Activated B cell treated with CpG ODN at 0.5 μM for 24 hours (primary cell): ENCODE measurements at regions of chr13 and their contacts with region 1.

Region 1: GRCh38 chr13:32443111-32443510 is 15.2 kb upstream of the N4BP2L1 start:
- DNase-seq: no peak
- ATAC-seq: peak; percentile 84
- H3K4me3 Mint-ChIP-seq: peak overlapping the region; percentile 15
- H3K27ac Mint-ChIP-seq: peak overlapping the region; percentile 71
- H3K4me1 Mint-ChIP-seq: peaks cover 21% of the 10 kb centered on the region
- H3K27me3 Mint-ChIP-seq: no peaks in the 10 kb centered on the region
- CTCF ChIP-seq: peak; percentile 26

Region 2: GRCh38 chr13:31431722-31432137 is 1011.4 kb before region 1 on chr13:
- CTCF ChIA-PET with region 1: no interaction called
- POLR2A ChIA-PET with region 1: no interaction called
- intact Hi-C with region 1: loop called (anchors 5 kb)
- DNase-seq: no peak
- ATAC-seq: peak; percentile 37
- H3K4me3 Mint-ChIP-seq: no peak overlapping the region
- H3K27ac Mint-ChIP-seq: no peak overlapping the region
- H3K4me1 Mint-ChIP-seq: no peaks in the 10 kb centered on the region
- H3K27me3 Mint-ChIP-seq: peaks cover 5% of the 10 kb centered on the region
- CTCF ChIP-seq: peak; percentile 48

Region 3: GRCh38 chr13:32010136-32010535 is 433.0 kb before region 1 on chr13:
- CTCF ChIA-PET with region 1: no interaction called
- POLR2A ChIA-PET with region 1: no interaction called
- intact Hi-C with region 1: no loop called
- DNase-seq: no peak
- ATAC-seq: no peak
- H3K4me3 Mint-ChIP-seq: no peak overlapping the region
- H3K27ac Mint-ChIP-seq: no peak overlapping the region
- H3K4me1 Mint-ChIP-seq: peaks cover 2% of the 10 kb centered on the region
- H3K27me3 Mint-ChIP-seq: no peaks in the 10 kb centered on the region
- CTCF ChIP-seq: no peak

Region 4: DNA sequence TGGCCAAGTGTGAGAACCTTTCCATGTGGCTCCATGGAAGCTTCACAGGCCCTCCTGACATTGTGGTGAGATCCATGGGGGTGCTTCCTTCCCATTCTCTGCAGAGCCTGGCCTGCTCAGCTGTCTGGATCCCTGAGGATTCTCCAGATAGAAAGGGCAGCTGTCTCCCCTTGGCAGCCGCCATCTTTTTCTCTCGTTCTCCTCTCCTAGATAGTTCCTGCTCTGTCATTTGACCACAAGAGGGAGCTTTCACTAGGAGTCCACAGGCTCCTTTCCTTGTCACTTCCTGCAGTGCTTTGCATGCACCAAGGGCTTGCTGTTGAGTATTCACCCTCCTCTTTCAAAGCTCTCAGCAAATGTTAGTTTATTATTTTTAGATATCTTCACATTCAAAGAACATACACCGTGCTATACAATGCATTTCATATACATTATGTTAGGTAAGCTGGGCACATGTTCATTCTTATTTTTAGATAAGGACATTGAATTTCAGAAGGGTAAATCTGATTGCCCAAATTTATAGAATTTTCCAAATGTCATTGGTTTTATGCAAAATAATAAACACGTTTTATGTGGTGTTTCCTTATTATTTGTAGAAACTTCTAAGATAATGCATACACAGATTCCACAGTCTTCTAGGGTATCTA is 278.4 kb before region 1 on chr13:
- CTCF ChIA-PET with region 1: interaction called, 4 read pairs
- POLR2A ChIA-PET with region 1: no interaction called
- intact Hi-C with region 1: loop called (anchors 2 kb)
- DNase-seq: no peak
- ATAC-seq: peak; percentile 52
- H3K4me3 Mint-ChIP-seq: no peak overlapping the region
- H3K27ac Mint-ChIP-seq: no peak overlapping the region
- H3K4me1 Mint-ChIP-seq: peaks cover 6% of the 10 kb centered on the region
- H3K27me3 Mint-ChIP-seq: no peaks in the 10 kb centered on the region
- CTCF ChIP-seq: no peak

Region 5: GRCh38 chr13:32233062-32233461 is 210.0 kb before region 1 on chr13:
- CTCF ChIA-PET with region 1: no interaction called
- POLR2A ChIA-PET with region 1: no interaction called
- intact Hi-C with region 1: no loop called
- DNase-seq: no peak
- ATAC-seq: no peak
- H3K4me3 Mint-ChIP-seq: no peak overlapping the region
- H3K27ac Mint-ChIP-seq: no peak overlapping the region
- H3K4me1 Mint-ChIP-seq: no peaks in the 10 kb centered on the region
- H3K27me3 Mint-ChIP-seq: no peaks in the 10 kb centered on the region
- CTCF ChIP-seq: no peak

Region 6: DNA sequence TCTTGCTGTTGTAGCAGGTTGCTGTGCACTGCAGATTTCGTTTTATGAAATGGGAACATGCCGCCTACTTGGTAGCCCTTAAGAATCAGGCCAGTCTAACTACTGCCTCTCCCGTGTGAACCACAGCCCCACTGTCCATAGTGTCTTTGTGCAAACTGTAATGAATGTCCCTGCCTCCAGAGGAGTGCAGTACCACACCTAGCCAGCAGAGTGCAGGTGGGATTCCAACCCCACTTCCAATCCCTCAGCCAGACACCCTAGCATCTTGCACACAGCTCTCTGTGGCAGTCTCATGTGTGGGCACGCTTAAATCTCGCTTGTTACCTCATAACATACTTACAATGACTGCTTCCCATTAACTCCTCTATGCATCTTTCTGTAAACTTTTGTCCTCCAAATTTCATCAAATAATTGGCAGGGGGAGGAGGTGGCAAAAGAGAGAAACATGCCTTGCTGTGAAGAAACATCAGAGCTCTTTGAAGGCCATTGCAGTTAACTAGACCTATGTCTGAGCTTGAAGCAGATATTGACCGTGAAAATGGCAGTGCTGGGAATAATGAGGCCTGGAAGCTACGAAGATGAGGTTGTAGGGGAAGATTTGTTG is 175.2 kb before region 1 on chr13:
- CTCF ChIA-PET with region 1: interaction called, 10 read pairs
- POLR2A ChIA-PET with region 1: no interaction called
- intact Hi-C with region 1: loop called (anchors 1 kb)
- DNase-seq: peak; percentile 22
- ATAC-seq: peak; percentile 93
- H3K4me3 Mint-ChIP-seq: no peak overlapping the region
- H3K27ac Mint-ChIP-seq: no peak overlapping the region
- H3K4me1 Mint-ChIP-seq: no peaks in the 10 kb centered on the region
- H3K27me3 Mint-ChIP-seq: no peaks in the 10 kb centered on the region
- CTCF ChIP-seq: peak; percentile 67

Region 7: DNA sequence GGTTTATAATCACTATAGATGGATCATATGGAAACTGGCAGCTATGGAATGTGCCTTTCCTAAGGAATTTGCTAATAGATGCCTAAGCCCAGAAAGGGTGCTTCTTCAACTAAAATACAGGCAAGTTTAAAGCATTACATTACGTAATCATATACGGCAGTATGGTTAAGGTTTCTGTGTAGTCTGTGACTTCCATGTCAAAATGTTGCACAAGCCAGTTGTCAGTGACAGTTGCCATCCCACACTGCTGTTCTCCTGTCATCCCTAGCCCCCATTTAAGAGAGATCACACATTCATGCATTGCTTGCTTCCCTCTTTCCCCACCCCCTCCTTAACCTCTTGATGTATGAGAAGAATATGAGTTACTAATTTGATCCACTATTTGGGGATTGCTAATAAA is 80.5 kb before region 1 on chr13:
- CTCF ChIA-PET with region 1: no interaction called
- POLR2A ChIA-PET with region 1: no interaction called
- intact Hi-C with region 1: no loop called
- DNase-seq: no peak
- ATAC-seq: no peak
- H3K4me3 Mint-ChIP-seq: no peak overlapping the region
- H3K27ac Mint-ChIP-seq: no peak overlapping the region
- H3K4me1 Mint-ChIP-seq: no peaks in the 10 kb centered on the region
- H3K27me3 Mint-ChIP-seq: no peaks in the 10 kb centered on the region
- CTCF ChIP-seq: no peak

Region 8: GRCh38 chr13:32381539-32381938 is 61.6 kb before region 1 on chr13:
- CTCF ChIA-PET with region 1: interaction called, 11 read pairs
- POLR2A ChIA-PET with region 1: no interaction called
- intact Hi-C with region 1: loop called (anchors 1 kb)
- DNase-seq: no peak
- ATAC-seq: peak; percentile 37
- H3K4me3 Mint-ChIP-seq: no peak overlapping the region
- H3K27ac Mint-ChIP-seq: no peak overlapping the region
- H3K4me1 Mint-ChIP-seq: no peaks in the 10 kb centered on the region
- H3K27me3 Mint-ChIP-seq: no peaks in the 10 kb centered on the region
- CTCF ChIP-seq: no peak

Region 9: DNA sequence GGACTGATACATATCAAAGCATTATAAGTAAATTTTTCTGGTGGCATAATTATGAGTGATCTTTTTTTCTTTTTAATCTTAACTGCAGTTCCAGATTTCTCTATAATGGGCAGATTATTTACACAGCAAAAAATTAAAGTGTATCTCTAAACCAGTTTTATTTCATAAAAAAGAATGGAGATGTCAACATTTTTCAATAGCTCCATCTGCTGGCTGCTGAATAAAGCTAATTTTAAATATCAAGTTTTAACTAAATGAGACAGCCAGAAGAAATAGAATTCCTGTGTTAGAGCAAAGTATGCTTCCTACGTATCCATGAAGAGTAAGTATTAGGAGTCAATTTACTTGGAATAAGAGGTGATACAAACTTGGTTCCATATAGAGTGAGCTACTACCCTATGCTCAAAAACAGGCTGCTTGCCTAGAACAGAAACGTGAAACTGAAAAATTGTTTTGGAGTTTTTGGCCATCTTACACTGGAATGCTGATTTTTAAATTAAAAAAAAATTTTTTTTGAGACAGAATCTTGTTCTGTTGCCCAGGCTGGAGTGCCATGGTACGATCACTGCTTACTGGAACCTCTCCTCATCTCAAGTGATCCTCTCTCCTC is 138.2 kb after region 1 on chr13:
- CTCF ChIA-PET with region 1: no interaction called
- POLR2A ChIA-PET with region 1: interaction called, 3 read pairs
- intact Hi-C with region 1: loop called (anchors 1 kb)
- DNase-seq: no peak
- ATAC-seq: no peak
- H3K4me3 Mint-ChIP-seq: no peak overlapping the region
- H3K27ac Mint-ChIP-seq: no peak overlapping the region
- H3K4me1 Mint-ChIP-seq: peaks cover 9% of the 10 kb centered on the region
- H3K27me3 Mint-ChIP-seq: no peaks in the 10 kb centered on the region
- CTCF ChIP-seq: no peak

Region 10: GRCh38 chr13:32938907-32939306 is 495.8 kb after region 1 on chr13:
- CTCF ChIA-PET with region 1: no interaction called
- POLR2A ChIA-PET with region 1: no interaction called
- intact Hi-C with region 1: no loop called
- DNase-seq: no peak
- ATAC-seq: no peak
- H3K4me3 Mint-ChIP-seq: no peak overlapping the region
- H3K27ac Mint-ChIP-seq: no peak overlapping the region
- H3K4me1 Mint-ChIP-seq: no peaks in the 10 kb centered on the region
- H3K27me3 Mint-ChIP-seq: peaks cover 20% of the 10 kb centered on the region
- CTCF ChIP-seq: no peak